Naive thymus-derived CD4-positive, alpha-beta T cell (primary cell): ENCODE measurements at regions of chr1 and their contacts with region 1.

Region 1: DNA sequence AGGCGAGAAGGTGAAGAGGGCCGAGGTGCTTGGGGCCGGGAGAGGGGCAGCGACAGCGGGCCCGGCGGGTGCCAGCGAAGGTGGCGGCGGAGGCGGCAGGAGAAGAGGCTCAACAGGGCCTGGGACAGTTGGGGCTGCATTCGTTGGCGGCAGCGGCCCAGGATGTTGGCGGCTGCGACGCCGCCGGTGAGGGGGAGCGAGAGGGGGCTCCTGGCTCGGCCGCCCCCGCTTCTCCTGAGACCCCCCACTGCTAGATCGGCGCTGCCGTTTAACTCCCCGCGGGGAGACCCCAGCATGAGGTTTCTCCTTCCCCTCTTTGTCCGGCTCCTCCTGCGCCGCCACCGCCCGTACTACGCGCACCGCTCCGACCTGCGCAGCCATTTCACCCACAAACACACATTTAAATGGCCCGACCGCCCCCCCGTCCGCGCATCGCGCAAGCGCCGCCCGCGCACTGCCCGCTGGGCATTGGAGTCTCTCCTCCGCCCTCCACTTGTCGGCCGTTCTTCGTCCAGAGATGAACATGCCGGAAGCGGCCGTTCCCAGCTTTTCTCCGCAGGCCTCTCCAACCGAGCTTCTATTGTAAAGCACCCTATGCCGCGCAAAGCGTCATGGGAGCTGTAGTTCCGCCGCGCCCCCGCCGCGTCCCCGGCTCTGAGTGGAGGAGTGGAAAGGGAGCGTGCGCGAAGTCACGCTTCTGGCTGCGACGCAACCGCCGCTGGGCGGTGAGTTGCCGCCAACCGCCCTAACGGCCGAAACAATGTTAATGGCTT is at the start of gene RSBN1:
- DNase-seq: peak; percentile 92 to 99 (median 98)
- ATAC-seq: peak; percentile 95
- H3K4me3 ChIP-seq: peak within 1 kb of the TSS; percentile 88
- H3K4me3 Mint-ChIP-seq: peak within 1 kb of the TSS; percentile 91 to 99 (median 97)
- H3K27ac ChIP-seq: peak within 1 kb of the TSS; percentile 97
- H3K27ac Mint-ChIP-seq: peak within 1 kb of the TSS; percentile 96 to 99 (median 98)
- H3K4me1 ChIP-seq: peaks cover 17 to 25% of the 10 kb centered on the region in 2 donors
- H3K4me1 Mint-ChIP-seq: peaks cover 20 to 51% (median 38%) of the 10 kb centered on the region in 7 donors
- H3K27me3 ChIP-seq: no peaks in the 10 kb centered on the region
- H3K27me3 Mint-ChIP-seq: no peaks in the 10 kb centered on the region
- total RNA-seq, gene RSBN1: 29.9 to 58.1 (median 42.0) TPM

Region 2: DNA sequence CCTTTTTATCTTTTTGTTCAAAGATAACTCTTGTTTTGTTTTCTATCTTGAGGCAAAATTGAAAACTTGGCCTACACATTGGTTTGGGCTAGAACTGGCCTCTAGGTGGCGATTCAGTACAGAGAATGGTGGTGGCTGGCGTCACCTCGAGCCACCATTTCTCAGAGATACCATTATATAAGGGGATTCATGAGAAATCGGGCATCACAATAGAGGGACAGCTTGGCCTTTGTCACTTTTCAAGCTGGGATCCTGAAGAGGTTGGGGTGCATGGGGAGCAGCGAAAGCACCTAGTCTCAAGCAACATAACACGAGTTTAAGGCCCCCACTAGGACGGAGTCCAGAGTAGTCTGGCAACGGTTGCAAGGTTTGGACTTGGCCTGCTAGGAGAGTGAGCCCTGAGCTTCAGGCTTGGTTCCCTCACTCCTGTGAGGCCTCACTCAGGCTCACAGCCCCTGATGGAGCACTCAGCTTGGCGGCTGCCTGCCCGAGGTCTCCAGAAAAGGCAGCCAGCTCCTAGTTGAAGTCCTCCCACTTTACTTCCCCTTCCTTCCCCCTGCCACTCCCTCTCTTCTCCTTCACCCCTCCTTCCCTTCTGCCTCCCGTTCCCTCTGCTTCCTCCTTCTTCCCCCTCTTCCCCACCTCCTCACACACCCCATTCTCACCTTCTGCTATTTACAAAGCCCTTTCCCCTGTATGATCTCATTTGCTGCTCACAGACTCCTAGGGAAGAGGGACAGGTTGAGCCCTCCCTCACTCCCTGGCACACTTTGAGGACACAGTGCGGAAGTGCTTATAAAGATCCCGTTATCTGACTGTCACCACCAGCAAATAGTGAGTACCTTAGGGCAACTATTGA is 671.3 kb before region 1 on chr1:
- CTCF ChIA-PET with region 1: no interaction called
- POLR2A ChIA-PET with region 1: no interaction called
- intact Hi-C with region 1: loop called (anchors 5 to 10 kb)
- DNase-seq: peak in 8 of 9 donors; percentile 8 to 62 (median 47)
- ATAC-seq: peak; percentile 87
- H3K4me3 ChIP-seq: no peak overlapping the region
- H3K4me3 Mint-ChIP-seq: peak overlapping the region in 2 of 10 donors; percentile 21 to 59
- H3K27ac ChIP-seq: no peak overlapping the region
- H3K27ac Mint-ChIP-seq: peak overlapping the region in 4 of 9 donors; percentile 21 to 49 (median 46)
- H3K4me1 ChIP-seq: peaks cover 0 to 8% of the 10 kb centered on the region in 2 donors
- H3K4me1 Mint-ChIP-seq: peaks cover 8 to 25% (median 19%) of the 10 kb centered on the region in 7 donors
- H3K27me3 ChIP-seq: no peaks in the 10 kb centered on the region
- H3K27me3 Mint-ChIP-seq: no peaks in the 10 kb centered on the region

Region 3: GRCh38 chr1:113871597-113872113 is 59.6 kb after region 1 on chr1 and contains the start of gene PTPN22:
- CTCF ChIA-PET with region 1: interaction called, 3 read pairs
- POLR2A ChIA-PET with region 1: interaction called, 3 read pairs
- intact Hi-C with region 1: loop called in 1 of 2 experiments (anchors 1 kb)
- DNase-seq: peak; percentile 41 to 91 (median 87)
- ATAC-seq: peak; percentile 98
- H3K4me3 ChIP-seq: peak within 1 kb of the TSS; percentile 81
- H3K4me3 Mint-ChIP-seq: peak within 1 kb of the TSS; percentile 82 to 95 (median 92)
- H3K27ac ChIP-seq: peak within 1 kb of the TSS; percentile 87
- H3K27ac Mint-ChIP-seq: peak within 1 kb of the TSS; percentile 94 to 99 (median 98)
- H3K4me1 ChIP-seq: peaks cover 30 to 65% of the 10 kb centered on the region in 2 donors
- H3K4me1 Mint-ChIP-seq: peaks cover 37 to 77% (median 72%) of the 10 kb centered on the region in 7 donors
- H3K27me3 ChIP-seq: no peaks in the 10 kb centered on the region
- H3K27me3 Mint-ChIP-seq: no peaks in the 10 kb centered on the region
- total RNA-seq, gene PTPN22: 22.2 to 76.7 (median 27.5) TPM

Region 4: DNA sequence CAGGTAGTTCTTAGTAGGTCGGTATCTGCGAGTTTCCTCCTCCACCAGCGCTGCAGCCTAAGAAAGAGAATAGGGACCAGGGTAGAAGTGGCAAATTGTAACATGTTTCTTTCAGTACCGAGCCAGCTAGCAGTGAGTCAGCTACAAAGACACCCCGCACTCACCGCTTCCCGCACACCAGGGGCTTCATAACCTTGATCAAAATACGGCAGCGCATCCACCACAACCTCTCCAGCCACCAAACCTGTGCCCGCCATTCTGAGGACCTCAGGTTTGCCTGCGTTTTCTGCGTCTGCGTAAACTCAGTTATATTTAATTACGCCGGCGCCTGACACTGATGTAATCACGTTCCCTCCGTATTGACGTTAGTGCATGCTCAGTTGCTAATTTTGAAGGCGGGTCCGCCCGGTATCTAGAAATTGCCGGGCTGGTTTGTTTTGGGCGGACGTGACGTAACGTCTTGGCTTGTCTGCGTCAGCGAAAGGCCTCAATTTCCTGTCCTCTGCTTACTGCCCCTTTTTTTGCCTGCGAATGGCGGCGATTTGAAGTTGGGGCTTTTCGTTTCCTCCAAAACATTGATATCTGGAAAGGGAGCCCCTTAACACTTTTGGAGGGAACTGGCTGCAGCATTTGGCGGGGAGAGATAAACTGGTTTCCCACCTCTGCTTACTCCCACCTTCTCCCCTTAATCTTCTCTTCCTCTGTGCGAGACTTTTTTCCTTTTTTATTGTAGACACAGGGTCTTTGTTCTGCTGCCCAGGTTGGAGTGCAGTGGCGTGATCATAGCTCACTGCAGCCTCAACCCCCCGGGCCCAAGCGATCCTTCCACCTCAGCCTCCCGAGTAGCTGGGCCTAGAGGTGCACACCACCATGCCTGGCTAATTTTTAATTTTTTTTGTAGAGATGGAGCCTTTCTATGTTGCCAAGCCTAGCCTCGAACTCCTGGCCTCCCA is 769.5 kb after region 1 on chr1 and contains the start of gene BCAS2:
- CTCF ChIA-PET with region 1: no interaction called
- POLR2A ChIA-PET with region 1: interaction called, 3 read pairs
- intact Hi-C with region 1: loop called in 1 of 2 experiments (anchors 1 kb)
- DNase-seq: peak; percentile 71 to 98 (median 97)
- ATAC-seq: peak; percentile 97
- H3K4me3 ChIP-seq: peak within 1 kb of the TSS; percentile 76
- H3K4me3 Mint-ChIP-seq: peak within 1 kb of the TSS; percentile 92 to 99 (median 98)
- H3K27ac ChIP-seq: peak within 1 kb of the TSS; percentile 93
- H3K27ac Mint-ChIP-seq: peak within 1 kb of the TSS; percentile 95 to 99 (median 98)
- H3K4me1 ChIP-seq: peaks cover 21 to 23% of the 10 kb centered on the region in 2 donors
- H3K4me1 Mint-ChIP-seq: peaks cover 14 to 55% (median 41%) of the 10 kb centered on the region in 7 donors
- H3K27me3 ChIP-seq: peaks cover 0 to 3% of the 10 kb centered on the region in 2 donors
- H3K27me3 Mint-ChIP-seq: peaks cover 0 to 4% (median 4%) of the 10 kb centered on the region in 5 donors
- total RNA-seq, gene BCAS2: 32.3 to 87.1 (median 46.0) TPM

Region 5: GRCh38 chr1:114757455-114758250 is 945.6 kb after region 1 on chr1 and contains the start of gene CSDE1:
- CTCF ChIA-PET with region 1: no interaction called
- POLR2A ChIA-PET with region 1: no interaction called
- intact Hi-C with region 1: loop called (anchors 1 to 5 kb)
- DNase-seq: peak; percentile 91 to 97 (median 96)
- ATAC-seq: peak; percentile 90
- H3K4me3 ChIP-seq: peak within 1 kb of the TSS; percentile 100
- H3K4me3 Mint-ChIP-seq: peak within 1 kb of the TSS; percentile 95 to 100 (median 100)
- H3K27ac ChIP-seq: peak within 1 kb of the TSS; percentile 97
- H3K27ac Mint-ChIP-seq: peak within 1 kb of the TSS; percentile 97 to 100 (median 100)
- H3K4me1 ChIP-seq: peaks cover 44 to 49% of the 10 kb centered on the region in 2 donors
- H3K4me1 Mint-ChIP-seq: peaks cover 32 to 60% (median 51%) of the 10 kb centered on the region in 7 donors
- H3K27me3 ChIP-seq: no peaks in the 10 kb centered on the region
- H3K27me3 Mint-ChIP-seq: no peaks in the 10 kb centered on the region
- total RNA-seq, gene CSDE1: 378 to 638 (median 561) TPM